Prostate gland (tissue), 2 donors: ENCODE measurements at regions of chr1 and their contacts with region 1.

Region 1: DNA sequence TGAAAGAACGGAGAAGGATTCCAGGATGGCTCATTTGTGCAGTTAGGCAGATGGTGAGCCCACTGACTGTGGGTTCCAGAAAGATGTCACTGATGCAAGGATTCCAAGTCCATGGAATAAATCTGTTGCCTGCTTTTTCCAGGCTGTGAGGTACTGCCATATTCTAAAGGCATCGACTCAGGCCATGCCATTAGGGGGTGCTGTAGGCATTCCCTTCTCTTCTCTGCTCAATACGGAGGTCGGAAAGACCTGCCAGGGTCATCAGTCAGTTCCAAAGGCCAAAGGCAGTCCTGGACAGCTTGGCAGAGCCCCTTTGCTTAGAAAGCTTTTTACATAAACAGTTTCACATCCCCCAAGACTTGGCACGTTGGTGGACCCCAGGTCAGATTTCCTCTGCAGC is 31.7 kb upstream of the TMEM125 start:
- DNase-seq: peak; percentile 52
- H3K4me3 ChIP-seq: no peak overlapping the region
- H3K27ac ChIP-seq: peak overlapping the region in 1 of 2 donors; percentile 33
- H3K4me1 ChIP-seq: peaks cover 9% of the 10 kb centered on the region
- H3K27me3 ChIP-seq: no peaks in the 10 kb centered on the region
- CTCF ChIP-seq: peak; percentile 32 to 77 (median 70)
- POLR2A ChIP-seq: no peak

Region 2: DNA sequence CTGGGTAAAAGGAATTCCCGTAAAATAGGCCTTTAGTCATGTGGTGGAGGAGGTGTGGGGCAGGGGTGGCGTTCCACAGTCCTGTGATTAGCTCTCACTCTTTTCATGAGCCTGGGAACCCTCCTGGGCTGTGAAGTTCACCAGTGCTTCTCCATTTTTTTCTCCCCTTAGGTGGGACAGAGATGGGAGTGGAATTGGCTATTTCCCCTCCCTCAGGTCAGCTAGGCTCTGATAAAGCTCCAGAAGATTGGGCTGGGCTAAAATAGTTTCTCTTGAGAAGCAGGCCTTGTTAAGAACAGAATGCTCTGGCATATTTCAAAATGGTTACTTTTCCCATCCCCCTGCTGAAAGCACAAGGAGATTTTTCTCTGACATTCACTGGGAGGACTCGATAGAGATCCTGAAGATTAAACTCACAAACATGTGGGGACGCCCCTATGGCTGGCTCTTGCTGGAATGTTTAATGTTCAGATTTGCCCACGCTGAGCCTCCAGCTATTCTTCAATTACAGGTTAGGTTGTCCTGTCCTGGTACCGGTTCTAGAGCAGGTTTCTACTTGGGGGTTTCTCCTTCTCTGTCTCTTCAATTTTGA is 245.9 kb before region 1 on chr1:
- intact Hi-C with region 1: no loop called
- DNase-seq: peak; percentile 29
- H3K4me3 ChIP-seq: no peak overlapping the region
- H3K27ac ChIP-seq: peak overlapping the region in 1 of 2 donors; percentile 3
- H3K4me1 ChIP-seq: no peaks in the 10 kb centered on the region
- H3K27me3 ChIP-seq: no peaks in the 10 kb centered on the region
- CTCF ChIP-seq: no peak
- POLR2A ChIP-seq: no peak

Region 3: GRCh38 chr1:43227143-43227764 is 10.8 kb before region 1 on chr1:
- intact Hi-C with region 1: no loop called
- DNase-seq: peak; percentile 83
- H3K4me3 ChIP-seq: no peak overlapping the region
- H3K27ac ChIP-seq: no peak overlapping the region
- H3K4me1 ChIP-seq: peaks cover 6% of the 10 kb centered on the region
- H3K27me3 ChIP-seq: no peaks in the 10 kb centered on the region
- CTCF ChIP-seq: peak; percentile 95 to 97 (median 96)
- POLR2A ChIP-seq: no peak

Region 4: GRCh38 chr1:43293896-43294760 is 56.0 kb after region 1 on chr1:
- intact Hi-C with region 1: loop called (anchors 5 kb)
- DNase-seq: peak; percentile 47
- H3K4me3 ChIP-seq: no peak overlapping the region
- H3K27ac ChIP-seq: peak overlapping the region; percentile 79 to 83
- H3K4me1 ChIP-seq: peaks cover 3% of the 10 kb centered on the region
- H3K27me3 ChIP-seq: no peaks in the 10 kb centered on the region
- CTCF ChIP-seq: no peak
- POLR2A ChIP-seq: peak; percentile 18

Region 5: DNA sequence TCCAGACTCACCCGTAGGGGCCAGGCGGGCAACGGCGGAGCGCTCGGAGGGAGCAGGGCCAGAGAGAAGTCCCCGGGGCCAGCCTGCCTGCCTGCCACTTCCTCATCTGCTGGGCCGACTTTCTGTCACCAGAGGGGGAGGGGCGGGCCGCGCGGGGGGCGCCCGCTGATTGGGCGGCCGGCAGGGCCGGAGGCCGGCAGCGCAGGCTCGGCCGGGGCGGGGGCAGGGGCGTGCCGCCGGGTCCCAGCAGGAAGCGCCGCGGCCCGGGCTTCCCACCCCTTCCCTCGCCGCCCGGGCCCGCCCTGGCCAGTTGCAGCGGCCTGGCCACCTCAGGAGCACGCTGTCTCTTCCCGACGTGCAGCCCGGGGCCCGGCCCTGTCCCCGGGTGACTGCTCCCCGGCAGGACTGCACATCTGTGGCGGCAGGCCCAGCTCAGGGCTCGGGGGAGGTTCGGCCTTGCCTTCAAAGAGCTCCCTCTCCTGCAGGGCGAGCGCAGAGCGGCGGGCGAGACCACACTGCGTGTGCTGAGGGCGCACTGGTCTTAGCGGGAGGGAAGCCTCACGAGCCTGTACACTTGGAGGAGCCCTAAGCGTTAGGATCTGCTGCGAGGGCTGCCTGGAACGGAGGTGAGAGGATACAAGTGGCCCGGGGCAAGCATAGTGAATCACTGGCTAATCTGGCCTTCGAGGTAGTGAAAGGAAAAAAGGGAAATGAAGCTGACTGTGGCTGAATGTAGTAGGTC is 130.0 kb after region 1 on chr1 and contains the start of gene ELOVL1:
- intact Hi-C with region 1: loop called (anchors 5 kb)
- DNase-seq: peak; percentile 90
- H3K4me3 ChIP-seq: peak within 1 kb of the TSS; percentile 62 to 66
- H3K27ac ChIP-seq: peak within 1 kb of the TSS; percentile 89 to 91
- H3K4me1 ChIP-seq: peaks cover 22% of the 10 kb centered on the region
- H3K27me3 ChIP-seq: no peaks in the 10 kb centered on the region
- CTCF ChIP-seq: peak in 2 of 4 experiments; percentile 29 to 40
- POLR2A ChIP-seq: peak; percentile 79
- total RNA-seq, gene ELOVL1: 48.6 to 62.0 TPM